Activated T-helper 1 cell treated with anti-CD3 and anti-CD28 coated beads, Interleukin-12 subunit alpha, Interleukin-12 subunit beta, Interleukin-2, Interleukin-4 antibody, amounts not matched to agents 30 ng/mL and 10 ng/mL and 1 ng/mL, durations not matched to agents 14 hours and 24 hours and 36 hours (primary cell): ENCODE measurements at regions of chr17 and their contacts with region 1.

Region 1: GRCh38 chr17:28644985-28645939 is at the start of gene BLTP2:
- DNase-seq: peak; percentile 95
- H3K4me3 Mint-ChIP-seq: peak within 1 kb of the TSS; percentile 91
- H3K27ac Mint-ChIP-seq: peak within 1 kb of the TSS; percentile 82
- H3K4me1 Mint-ChIP-seq: peaks cover 33% of the 10 kb centered on the region
- H3K27me3 Mint-ChIP-seq: no peaks in the 10 kb centered on the region
- total RNA-seq, gene BLTP2: 210 and 212 TPM in 2 replicates

Region 2: DNA sequence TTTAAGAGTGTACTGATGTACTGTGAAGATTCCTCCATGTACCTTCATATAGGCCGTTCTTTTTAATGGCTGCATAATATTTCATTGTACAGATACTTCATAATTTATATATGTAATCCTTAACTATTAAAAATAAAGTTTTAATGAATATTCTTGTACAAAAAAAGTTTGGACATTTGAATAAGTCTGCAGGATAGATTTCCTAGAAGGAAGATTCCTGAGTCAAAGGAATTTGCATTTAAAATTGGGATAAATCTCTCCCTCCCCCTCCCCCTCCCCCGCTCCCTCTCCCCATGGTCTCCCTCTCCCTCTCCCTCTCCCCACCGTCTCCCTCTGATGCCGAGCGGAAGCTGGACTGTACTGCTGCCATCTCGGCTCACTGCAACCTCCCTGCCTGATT is 187.4 kb before region 1 on chr17:
- intact Hi-C with region 1: no loop called
- DNase-seq: no peak
- H3K4me3 Mint-ChIP-seq: no peak overlapping the region
- H3K27ac Mint-ChIP-seq: no peak overlapping the region
- H3K4me1 Mint-ChIP-seq: no peaks in the 10 kb centered on the region
- H3K27me3 Mint-ChIP-seq: peaks cover 5% of the 10 kb centered on the region

Region 3: DNA sequence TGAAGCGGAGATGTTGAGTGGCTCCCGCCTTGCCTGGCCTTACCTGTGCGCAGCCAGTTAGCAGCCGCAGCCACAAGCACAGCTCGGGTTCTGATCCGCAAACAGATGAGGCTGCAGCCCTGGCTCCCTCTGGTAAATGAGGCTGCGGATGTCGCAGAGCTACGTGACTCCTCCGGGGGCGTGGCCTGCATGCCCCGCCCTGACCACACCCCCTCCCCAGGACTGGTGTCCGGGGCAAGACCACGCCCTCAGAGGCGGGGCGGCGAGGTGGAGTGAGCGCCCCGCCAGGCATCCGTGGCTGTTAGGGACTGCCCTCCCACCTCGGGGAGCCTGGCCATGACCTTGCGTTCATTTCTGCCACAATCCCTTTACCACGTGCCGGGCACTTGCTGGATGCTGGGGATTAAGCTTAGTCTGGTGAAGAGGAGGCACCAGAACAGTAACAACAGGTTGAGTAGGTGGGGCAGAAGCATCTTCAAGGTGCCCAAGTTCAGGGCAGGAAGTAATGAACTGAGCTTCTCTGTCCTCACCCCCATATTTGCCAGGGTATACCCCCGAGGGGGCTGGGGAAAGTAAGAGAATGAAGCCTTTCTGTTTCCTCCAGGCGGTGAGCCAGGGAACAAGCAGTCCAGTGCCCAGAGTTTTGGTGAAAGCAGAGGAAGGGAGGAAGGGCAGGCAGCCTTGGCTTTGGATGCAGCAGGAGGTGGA is 68.3 kb before region 1 on chr17 and contains the start of gene ALDOC:
- intact Hi-C with region 1: loop called (anchors 1 kb)
- DNase-seq: peak; percentile 98
- H3K4me3 Mint-ChIP-seq: peak within 1 kb of the TSS; percentile 86
- H3K27ac Mint-ChIP-seq: peak within 1 kb of the TSS; percentile 94
- H3K4me1 Mint-ChIP-seq: peaks cover 79% of the 10 kb centered on the region
- H3K27me3 Mint-ChIP-seq: no peaks in the 10 kb centered on the region
- total RNA-seq, gene ALDOC: 44.0 and 47.6 TPM in 2 replicates

Region 4: DNA sequence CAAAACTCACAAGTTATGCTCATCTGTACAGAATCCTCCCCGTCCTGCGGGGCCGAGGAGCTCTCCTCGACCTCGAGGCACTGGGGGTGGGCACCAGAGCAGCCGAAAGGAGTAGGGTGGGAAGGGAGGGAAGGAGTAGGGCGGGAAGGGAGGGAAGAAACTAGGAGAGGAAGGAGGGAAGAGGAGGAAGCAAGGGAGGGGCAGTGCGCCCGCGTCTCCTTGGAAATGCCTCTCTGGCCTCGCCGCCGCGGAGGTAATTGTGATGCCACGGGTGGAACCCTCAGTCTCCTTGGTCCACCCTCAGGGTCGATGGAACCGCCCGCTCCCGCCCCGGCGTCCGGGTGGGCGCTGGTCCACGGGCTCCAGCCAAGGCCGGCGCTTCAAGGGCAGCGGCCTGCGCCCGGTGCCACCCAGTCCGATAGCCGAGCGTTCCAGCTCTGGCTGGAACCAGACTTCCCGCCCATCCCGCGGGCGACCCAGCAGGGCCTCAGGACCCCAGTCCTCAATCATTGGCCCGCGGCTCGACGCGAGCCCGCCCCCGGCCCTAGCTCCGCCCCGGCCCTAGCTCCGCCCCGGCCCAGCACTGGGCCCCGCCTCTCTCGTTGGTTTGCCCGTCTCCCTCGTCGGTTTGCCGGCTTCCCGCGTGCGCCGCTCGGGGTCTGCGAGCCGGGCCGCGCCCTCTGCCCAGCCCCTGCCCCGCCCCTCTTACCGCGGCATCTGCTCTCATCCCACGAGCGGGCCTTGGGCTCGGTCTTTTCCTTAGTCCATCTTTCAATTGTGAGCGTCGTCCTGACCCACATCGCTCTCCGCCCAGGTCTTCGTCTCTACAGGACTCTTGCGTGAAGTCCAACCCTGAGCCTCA is 65.8 kb after region 1 on chr17:
- intact Hi-C with region 1: loop called (anchors 1 kb)
- DNase-seq: peak; percentile 92
- H3K4me3 Mint-ChIP-seq: peak overlapping the region; percentile 89
- H3K27ac Mint-ChIP-seq: peak overlapping the region; percentile 92
- H3K4me1 Mint-ChIP-seq: peaks cover 20% of the 10 kb centered on the region
- H3K27me3 Mint-ChIP-seq: peaks cover 16% of the 10 kb centered on the region

Region 5: DNA sequence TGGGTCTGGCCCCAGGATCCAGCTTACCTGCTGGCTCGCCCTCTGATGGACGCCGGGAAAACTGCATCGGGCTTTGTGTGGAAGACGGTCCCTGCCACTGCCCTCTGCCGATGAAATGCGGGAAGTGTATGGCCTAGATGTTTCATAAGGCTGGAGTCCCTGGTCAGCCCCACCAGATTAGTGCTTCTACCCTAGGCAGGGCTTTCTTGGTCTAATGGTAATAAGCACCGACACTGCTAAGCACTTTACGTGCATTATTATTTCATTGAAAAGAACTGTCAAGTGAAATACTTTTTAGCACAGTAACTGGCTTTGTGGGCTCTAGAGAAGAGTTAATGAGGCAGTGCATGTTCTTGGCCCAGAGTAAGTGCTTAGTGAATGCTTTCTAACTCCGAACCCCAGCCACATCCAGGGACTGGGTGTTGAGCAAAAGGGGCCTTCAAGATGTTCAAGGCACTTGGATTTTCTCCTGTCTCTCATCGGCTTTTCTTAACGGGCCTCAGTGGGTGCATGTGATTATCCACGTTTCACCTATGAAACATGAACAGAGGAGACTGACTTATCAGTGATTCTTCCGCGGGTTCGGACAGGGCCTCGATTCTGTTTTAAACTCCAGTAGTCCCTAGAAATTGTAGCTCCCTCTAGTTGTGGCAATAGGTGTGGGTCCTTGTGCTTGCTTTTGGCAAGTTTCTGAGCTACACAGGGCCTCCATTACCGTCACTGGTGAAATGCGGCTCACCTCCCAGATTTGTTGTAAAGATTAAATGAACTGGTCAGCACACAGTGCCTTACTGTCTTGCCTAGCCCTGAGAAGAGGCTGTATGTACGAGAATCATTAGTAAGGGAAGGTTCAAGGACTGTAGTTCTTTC is 105.2 kb after region 1 on chr17:
- intact Hi-C with region 1: loop called (anchors 1 kb)
- DNase-seq: peak; percentile 82
- H3K4me3 Mint-ChIP-seq: peak overlapping the region; percentile 11
- H3K27ac Mint-ChIP-seq: no peak overlapping the region
- H3K4me1 Mint-ChIP-seq: peaks cover 21% of the 10 kb centered on the region
- H3K27me3 Mint-ChIP-seq: no peaks in the 10 kb centered on the region